MCF 10A (cell line): ENCODE measurements at regions of chr5 and their contacts with region 1.

Region 1: GRCh38 chr5:107893642-107894041 is 222.9 kb upstream of the EFNA5 start:
- DNase-seq: peak; percentile 91
- H3K4me3 Mint-ChIP-seq: peak overlapping the region; percentile 57
- H3K27ac Mint-ChIP-seq: peak overlapping the region; percentile 39
- H3K4me1 Mint-ChIP-seq: peaks cover 5% of the 10 kb centered on the region
- H3K27me3 Mint-ChIP-seq: no peaks in the 10 kb centered on the region
- CTCF ChIP-seq: no peak

Region 2: DNA sequence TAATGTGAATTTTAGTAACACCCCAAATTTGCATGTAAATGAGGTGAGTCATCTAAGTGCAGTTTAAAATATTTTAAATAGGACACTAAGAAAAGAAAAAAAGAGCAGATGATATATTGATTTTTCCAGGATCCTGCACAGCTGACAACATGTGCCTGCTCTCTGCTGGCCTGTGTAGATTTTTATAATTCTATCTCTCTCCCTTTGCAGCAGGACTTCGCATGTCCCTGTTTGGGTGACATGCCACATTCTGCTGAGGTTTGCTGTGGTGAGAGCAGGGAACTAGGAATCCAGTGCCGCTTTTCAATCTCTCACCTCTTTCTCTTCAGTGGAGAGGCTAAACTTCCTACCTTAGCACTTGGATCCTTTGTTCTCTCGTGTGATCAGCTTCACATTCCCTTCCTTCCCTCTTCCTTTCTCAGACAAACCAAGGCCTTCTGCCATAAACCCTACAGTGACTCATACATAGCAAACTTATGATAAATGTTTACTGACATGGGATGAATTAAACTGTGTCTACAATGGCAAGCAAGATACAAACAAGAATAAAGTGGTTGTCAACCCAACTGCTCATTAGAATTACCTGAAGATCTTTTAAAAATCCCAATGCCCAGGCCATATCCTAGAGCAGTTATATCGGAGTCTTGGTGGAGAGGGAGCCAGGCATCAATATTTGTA is 24.1 kb before region 1 on chr5:
- CTCF ChIA-PET with region 1: no interaction called
- POLR2A ChIA-PET with region 1: interaction called, 10 read pairs
- intact Hi-C with region 1: no loop called
- DNase-seq: peak; percentile 61
- H3K4me3 Mint-ChIP-seq: no peak overlapping the region
- H3K27ac Mint-ChIP-seq: peak overlapping the region; percentile 1
- H3K4me1 Mint-ChIP-seq: peaks cover 7% of the 10 kb centered on the region
- H3K27me3 Mint-ChIP-seq: no peaks in the 10 kb centered on the region
- CTCF ChIP-seq: no peak

Region 3: DNA sequence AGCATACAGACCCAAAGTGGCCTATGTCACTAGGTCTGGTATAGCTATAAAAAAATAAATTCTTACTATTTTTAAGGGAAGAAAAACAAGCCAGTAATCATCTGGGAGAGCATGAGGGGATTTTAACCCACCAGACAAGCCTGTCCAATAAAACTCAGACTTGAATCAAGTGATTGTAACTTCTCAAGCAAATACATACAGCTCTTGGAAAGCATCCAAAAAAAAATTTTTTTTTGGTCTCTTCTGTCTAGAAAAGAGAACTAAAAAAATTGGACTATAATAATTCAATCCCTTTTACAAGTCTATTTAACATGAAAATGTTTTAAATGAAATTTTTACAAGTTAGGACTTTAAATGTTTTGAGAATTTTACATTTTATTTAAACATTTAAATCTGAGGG is 426.6 kb after region 1 on chr5:
- CTCF ChIA-PET with region 1: no interaction called
- POLR2A ChIA-PET with region 1: no interaction called
- intact Hi-C with region 1: no loop called
- DNase-seq: no peak
- H3K4me3 Mint-ChIP-seq: no peak overlapping the region
- H3K27ac Mint-ChIP-seq: no peak overlapping the region
- H3K4me1 Mint-ChIP-seq: peaks cover 6% of the 10 kb centered on the region
- H3K27me3 Mint-ChIP-seq: no peaks in the 10 kb centered on the region
- CTCF ChIP-seq: no peak